Left ventricle myocardium superior (tissue), 1 donor: ENCODE measurements at regions of chr17 and their contacts with region 1.

Region 1: DNA sequence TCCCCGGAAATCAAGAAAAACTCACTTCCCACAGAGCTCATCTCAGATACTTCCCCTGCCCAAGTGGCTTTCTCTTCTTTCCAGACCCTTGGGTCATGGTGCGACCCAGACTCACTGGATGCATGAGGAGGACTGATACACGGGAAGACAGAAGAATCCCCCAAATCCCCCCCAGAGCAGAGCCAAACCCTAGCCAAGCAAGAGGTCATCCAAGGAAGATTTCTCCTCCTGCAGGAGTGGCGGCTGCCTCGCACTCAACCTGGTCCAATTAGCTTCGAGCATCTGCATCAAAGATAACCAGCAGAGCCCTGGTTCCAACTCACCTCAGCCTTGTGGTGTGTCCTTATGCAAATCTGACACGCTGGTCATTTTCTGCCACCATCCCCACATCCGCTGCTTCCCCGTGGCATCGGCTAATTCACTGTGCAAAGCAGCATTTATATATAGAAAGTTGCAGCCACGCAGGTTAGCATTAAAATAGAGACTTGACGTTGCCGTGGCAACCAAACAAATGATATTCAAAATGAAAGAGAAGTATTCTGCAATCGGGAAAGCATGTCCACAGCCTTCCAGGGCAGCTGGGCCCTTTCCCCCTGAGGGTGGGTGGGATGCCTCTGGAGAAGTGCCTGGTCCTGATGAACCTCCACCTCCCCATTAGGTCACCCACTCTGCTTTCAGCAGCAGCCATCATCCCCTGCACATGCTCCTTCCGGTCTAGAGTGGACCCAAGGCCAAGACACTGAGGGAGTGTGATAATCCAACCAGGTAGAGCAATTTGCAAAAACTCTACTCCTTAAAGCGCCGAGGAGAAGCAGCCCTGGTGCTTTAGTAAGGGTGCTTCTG is 138.8 kb downstream of the GAS7 start:
- DNase-seq: peak; percentile 67
- ATAC-seq: peak; percentile 75

Region 2: DNA sequence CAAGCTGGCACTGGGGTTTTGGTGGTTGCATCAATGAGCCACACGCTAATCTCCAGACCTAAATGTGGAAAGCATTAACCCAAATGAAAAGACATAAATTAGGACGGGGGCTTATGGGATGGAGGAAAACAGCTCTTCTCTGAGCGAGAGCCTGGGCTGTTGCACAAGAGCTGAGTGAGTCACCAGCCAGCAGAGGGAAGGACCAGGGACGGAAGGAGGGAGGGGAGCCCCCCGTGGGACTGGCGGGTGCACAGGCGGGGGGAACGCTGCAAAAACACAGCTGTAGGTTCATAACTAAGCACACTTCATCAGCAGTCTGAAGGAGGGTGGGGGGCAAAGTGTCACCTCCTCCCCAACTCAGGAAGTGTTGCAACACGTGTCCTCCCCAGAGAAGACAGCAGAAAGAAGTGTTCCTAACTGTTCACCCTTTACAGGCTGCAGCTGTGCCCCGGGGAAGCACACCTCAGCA is 55.5 kb after region 1 on chr17:
- intact Hi-C with region 1: loop called (anchors 10 kb)
- DNase-seq: peak; percentile 94
- ATAC-seq: peak; percentile 86